ENCODE measurements at regions of chr5 and their contacts with region 1.

Region 1: GRCh38 chr5:33477816-33478215 is 37.1 kb downstream of the TARS1 start:
- DNase-seq: no peak
- H3K4me3 ChIP-seq: no peak overlapping the region
- H3K4me3 Mint-ChIP-seq: no peak overlapping the region
- H3K27ac ChIP-seq: no peak overlapping the region
- H3K27ac Mint-ChIP-seq: no peak overlapping the region
- H3K4me1 ChIP-seq: no peaks in the 10 kb centered on the region
- H3K4me1 Mint-ChIP-seq: no peaks in the 10 kb centered on the region
- H3K27me3 ChIP-seq: no peaks in the 10 kb centered on the region
- H3K27me3 Mint-ChIP-seq: no peaks in the 10 kb centered on the region

Region 2: GRCh38 chr5:33494466-33494865 is 16.6 kb after region 1 on chr5:
- CTCF ChIA-PET with region 1: no interaction called
- POLR2A ChIA-PET with region 1: interaction called, 11 read pairs
- DNase-seq: no peak
- H3K4me3 ChIP-seq: no peak overlapping the region
- H3K4me3 Mint-ChIP-seq: no peak overlapping the region
- H3K27ac ChIP-seq: no peak overlapping the region
- H3K27ac Mint-ChIP-seq: no peak overlapping the region
- H3K4me1 ChIP-seq: no peaks in the 10 kb centered on the region
- H3K4me1 Mint-ChIP-seq: peaks cover 0 to 6% (median 2%) of the 10 kb centered on the region in 3 donors
- H3K27me3 ChIP-seq: no peaks in the 10 kb centered on the region
- H3K27me3 Mint-ChIP-seq: no peaks in the 10 kb centered on the region